IMR-90 (cell line): ENCODE measurements at regions of chr16 and their contacts with region 1.

Region 1: GRCh38 chr16:73058221-73058615 is 10.3 kb upstream of the ZFHX3 start:
- DNase-seq: no peak
- ATAC-seq: peak; percentile 25
- H3K4me3 ChIP-seq: peak overlapping the region; percentile 82
- H3K27ac ChIP-seq: peak overlapping the region; percentile 4
- H3K4me1 ChIP-seq: peaks cover 23% of the 10 kb centered on the region
- H3K27me3 ChIP-seq: no peaks in the 10 kb centered on the region
- CTCF ChIP-seq: 0 out of 2 replicates have a peak, but pooled peaks have one; percentile 5
- POLR2A ChIP-seq: no peak
- RAD21 ChIP-seq: no peak

Region 2: GRCh38 chr16:72400257-72400882 is 657.8 kb before region 1 on chr16:
- CTCF ChIA-PET with region 1: no interaction called
- POLR2A ChIA-PET with region 1: no interaction called
- dilution Hi-C with region 1: no loop called
- in situ Hi-C with region 1: no loop called
- intact Hi-C with region 1: loop called (anchors 2 kb)
- DNase-seq: peak; percentile 62
- ATAC-seq: peak; percentile 91
- H3K4me3 ChIP-seq: no peak overlapping the region
- H3K27ac ChIP-seq: no peak overlapping the region
- H3K4me1 ChIP-seq: no peaks in the 10 kb centered on the region; the same call in 1 of the 2 replicates
- H3K27me3 ChIP-seq: no peaks in the 10 kb centered on the region
- CTCF ChIP-seq: peak; percentile 66
- POLR2A ChIP-seq: no peak
- RAD21 ChIP-seq: peak; percentile 54

Region 3: DNA sequence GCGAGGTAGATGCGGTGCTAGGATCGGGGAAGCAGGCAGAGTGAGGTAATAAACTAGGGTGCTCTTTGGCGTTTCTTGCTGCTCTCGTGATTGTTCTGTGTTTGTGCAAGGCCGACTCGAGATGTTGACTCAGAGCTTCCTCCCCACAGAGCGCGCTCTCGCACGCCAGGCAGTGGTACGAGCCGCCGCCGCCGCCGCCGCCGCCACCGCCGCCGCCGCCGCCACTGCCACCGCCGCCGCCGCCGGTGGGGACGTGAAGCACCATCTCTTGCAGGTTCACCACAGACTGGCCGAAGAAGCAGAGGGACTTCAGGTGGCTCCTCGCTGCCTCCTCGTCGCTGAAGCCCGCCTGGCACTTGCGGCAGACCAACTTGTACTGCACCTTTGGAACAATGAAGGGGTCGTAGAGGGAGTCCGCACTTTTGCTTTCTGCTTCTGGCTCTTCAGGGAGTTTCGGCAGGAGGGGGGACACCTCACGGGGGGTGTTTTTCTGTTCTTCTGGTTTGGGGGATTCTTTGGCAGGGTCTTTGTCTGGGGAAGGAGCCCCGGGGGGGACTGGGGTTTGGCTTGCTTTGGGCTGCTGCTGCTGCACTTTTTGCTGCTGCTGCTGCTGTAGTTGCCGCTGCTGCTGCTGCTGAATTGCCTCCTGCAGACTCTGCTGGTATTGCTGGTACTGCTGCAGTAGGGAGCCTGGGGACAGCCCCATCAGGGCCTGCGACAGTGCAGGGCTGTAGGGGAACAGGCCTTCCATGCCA is 270.5 kb before region 1 on chr16:
- CTCF ChIA-PET with region 1: interaction called, 4 read pairs
- POLR2A ChIA-PET with region 1: no interaction called
- dilution Hi-C with region 1: no loop called
- in situ Hi-C with region 1: no loop called
- intact Hi-C with region 1: loop called (anchors 2 kb)
- DNase-seq: peak; percentile 94
- ATAC-seq: peak; percentile 87
- H3K4me3 ChIP-seq: peak overlapping the region; percentile 76
- H3K27ac ChIP-seq: peak overlapping the region; percentile 85
- H3K4me1 ChIP-seq: peaks cover 7% of the 10 kb centered on the region
- H3K27me3 ChIP-seq: no peaks in the 10 kb centered on the region
- CTCF ChIP-seq: no peak
- POLR2A ChIP-seq: no peak
- RAD21 ChIP-seq: no peak

Region 4: DNA sequence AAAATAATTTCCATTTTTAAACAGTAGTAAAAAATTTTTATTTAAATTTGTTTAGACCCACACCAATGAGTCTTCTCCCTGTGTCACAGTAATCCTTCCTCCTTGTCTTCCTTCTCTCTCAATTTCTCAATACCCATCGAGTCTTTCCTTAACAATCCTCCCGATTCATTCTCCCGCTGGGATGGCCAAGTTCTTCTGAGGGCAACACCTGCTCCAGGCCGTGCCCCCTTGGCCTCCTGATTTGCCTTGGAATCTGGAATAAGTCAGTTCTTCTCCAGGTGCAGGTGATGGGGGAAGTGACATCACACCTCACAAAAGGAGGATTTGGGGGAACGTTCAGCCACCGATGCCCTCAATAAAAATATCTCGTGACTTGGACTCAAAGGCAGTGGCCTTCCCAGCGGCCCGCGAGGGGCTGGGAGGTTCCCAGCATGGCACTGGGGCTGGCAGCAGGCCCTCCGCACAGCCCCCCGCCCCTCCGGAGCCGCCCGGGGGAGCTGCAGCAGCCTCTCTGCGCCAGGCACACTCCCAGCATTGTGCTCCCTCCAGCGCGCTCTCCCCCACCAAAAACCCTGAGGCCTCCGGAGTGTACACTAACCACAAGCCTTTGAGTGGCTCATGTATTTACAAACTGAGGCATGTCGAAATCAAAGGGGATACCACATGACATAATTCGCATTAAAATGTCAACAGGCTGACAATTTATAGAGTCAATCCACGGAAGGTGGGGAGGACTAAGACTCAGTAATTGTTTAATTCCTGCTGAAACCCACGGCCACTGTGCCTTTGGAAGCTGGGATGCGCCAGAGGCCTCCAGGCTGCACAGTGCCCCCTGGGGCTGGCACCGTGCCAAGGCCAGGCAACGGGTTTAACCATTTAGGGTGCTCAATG is 130.8 kb before region 1 on chr16:
- CTCF ChIA-PET with region 1: no interaction called
- POLR2A ChIA-PET with region 1: no interaction called
- dilution Hi-C with region 1: no loop called
- in situ Hi-C with region 1: no loop called
- intact Hi-C with region 1: loop called (anchors 2 kb)
- DNase-seq: peak; percentile 97
- ATAC-seq: peak; percentile 87
- H3K4me3 ChIP-seq: no peak overlapping the region
- H3K27ac ChIP-seq: no peak overlapping the region
- H3K4me1 ChIP-seq: peaks cover 14% of the 10 kb centered on the region
- H3K27me3 ChIP-seq: peaks cover 4% of the 10 kb centered on the region; the same call in 1 of the 2 replicates
- CTCF ChIP-seq: no peak; the same call in 1 of the 2 replicates
- POLR2A ChIP-seq: no peak
- RAD21 ChIP-seq: peak; percentile 28; the same call in 1 of the 2 replicates

Region 5: DNA sequence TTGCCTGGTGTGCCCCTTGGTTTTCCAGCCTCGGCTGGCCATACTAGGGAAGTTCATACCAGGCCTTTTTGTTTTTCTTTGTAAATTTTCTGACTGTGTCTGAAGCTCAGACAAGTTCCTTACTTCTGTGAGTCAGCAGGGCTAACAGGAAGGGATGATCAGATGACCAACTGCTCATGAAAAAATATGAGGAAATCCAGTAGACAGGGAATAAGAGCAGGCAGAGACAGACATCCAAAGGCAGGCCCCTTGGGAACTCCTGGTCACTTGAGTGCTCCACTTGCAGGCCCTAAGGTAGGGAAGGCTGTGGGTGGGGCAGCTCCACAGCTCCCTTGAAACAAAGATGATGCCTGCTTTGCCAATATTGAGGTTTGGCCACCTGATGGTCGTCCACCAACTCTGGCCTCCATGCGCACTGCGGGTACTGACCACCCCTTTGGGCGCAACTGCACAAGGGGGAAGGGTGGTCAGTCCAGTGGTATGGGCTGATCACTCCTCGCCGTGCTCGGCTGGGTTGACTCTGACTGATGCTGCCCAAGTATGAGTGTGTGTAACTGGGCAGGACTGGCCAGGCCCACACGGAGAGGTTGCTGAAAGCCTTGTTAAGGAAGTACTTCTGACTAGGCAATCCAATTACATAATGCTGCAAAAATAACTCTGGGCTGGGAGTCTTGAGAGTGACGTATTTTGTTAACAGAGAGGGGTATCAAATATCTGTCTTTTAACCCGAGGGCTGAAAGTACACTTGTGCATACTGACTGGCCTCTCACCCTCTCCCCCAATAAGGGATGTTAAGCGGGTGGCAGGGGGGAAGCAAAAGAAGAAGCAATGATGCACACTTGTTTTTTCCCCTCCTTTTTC is 10.6 kb after region 1 on chr16:
- CTCF ChIA-PET with region 1: no interaction called
- POLR2A ChIA-PET with region 1: no interaction called
- dilution Hi-C with region 1: no loop called
- in situ Hi-C with region 1: no loop called
- intact Hi-C with region 1: no loop called
- DNase-seq: peak; percentile 99
- ATAC-seq: peak; percentile 80
- H3K4me3 ChIP-seq: no peak overlapping the region
- H3K27ac ChIP-seq: peak overlapping the region; percentile 95
- H3K4me1 ChIP-seq: peaks cover 38% of the 10 kb centered on the region
- H3K27me3 ChIP-seq: no peaks in the 10 kb centered on the region
- CTCF ChIP-seq: no peak
- POLR2A ChIP-seq: peak; percentile 73
- RAD21 ChIP-seq: peak; percentile 23

Region 6: GRCh38 chr16:73418691-73419090 is 360.5 kb after region 1 on chr16:
- CTCF ChIA-PET with region 1: no interaction called
- POLR2A ChIA-PET with region 1: no interaction called
- dilution Hi-C with region 1: no loop called
- in situ Hi-C with region 1: no loop called
- intact Hi-C with region 1: loop called (anchors 10 kb)
- DNase-seq: peak; percentile 22
- ATAC-seq: peak; percentile 35
- H3K4me3 ChIP-seq: no peak overlapping the region
- H3K27ac ChIP-seq: peak overlapping the region; percentile 92; the same call in 1 of the 2 replicates
- H3K4me1 ChIP-seq: peaks cover 7% of the 10 kb centered on the region; the same call in 1 of the 2 replicates
- H3K27me3 ChIP-seq: no peaks in the 10 kb centered on the region
- CTCF ChIP-seq: no peak
- POLR2A ChIP-seq: no peak
- RAD21 ChIP-seq: no peak

Region 7: DNA sequence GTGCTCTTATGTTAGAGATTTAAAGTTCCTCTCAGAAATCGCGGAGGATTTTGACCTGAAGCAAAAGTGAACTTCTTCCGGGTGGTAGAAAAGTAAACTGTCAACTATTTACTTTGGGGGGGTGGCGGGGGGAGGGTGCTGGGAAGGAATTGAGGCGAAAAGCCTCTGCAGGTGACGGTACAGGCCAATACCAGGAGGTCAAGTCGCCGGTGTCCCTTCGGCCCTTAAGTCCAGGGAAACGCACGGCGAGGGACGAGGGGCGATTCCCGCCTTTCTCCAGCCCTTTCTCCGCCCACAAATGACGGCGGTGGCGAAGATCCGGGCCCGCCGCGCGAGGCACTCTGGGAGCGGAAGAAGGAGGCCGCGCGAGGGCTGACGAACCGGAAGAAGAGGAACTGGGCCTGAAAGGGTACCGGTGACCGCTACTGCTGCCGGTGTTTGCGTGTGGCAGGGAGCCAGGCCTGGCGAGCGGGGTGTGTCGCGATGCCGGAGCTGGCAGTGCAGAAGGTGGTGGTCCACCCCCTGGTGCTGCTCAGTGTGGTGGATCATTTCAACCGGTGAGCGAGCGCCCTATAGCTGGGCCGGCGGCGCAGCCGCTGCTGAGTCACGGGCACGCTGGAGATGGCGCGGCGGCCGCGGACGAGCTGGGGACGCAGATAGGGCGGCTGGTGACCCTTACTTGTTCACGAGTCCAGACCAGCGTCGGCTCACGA is 1238.4 kb after region 1 on chr16 and contains the start of gene PSMD7:
- CTCF ChIA-PET with region 1: no interaction called
- POLR2A ChIA-PET with region 1: no interaction called
- dilution Hi-C with region 1: no loop called
- in situ Hi-C with region 1: loop called (anchors 25 kb)
- intact Hi-C with region 1: no loop called
- DNase-seq: peak; percentile 85
- ATAC-seq: peak; percentile 94
- H3K4me3 ChIP-seq: peak within 1 kb of the TSS; percentile 81
- H3K27ac ChIP-seq: peak within 1 kb of the TSS; percentile 94
- H3K4me1 ChIP-seq: peaks cover 4% of the 10 kb centered on the region; the same call in 1 of the 2 replicates
- H3K27me3 ChIP-seq: no peaks in the 10 kb centered on the region
- CTCF ChIP-seq: no peak
- POLR2A ChIP-seq: peak; percentile 91
- RAD21 ChIP-seq: no peak
- total RNA-seq, gene PSMD7: 80.8 and 124 TPM in 2 replicates